Heart right ventricle (tissue), 16 donors: ENCODE measurements at regions of chr7 and their contacts with region 1.

Region 1: DNA sequence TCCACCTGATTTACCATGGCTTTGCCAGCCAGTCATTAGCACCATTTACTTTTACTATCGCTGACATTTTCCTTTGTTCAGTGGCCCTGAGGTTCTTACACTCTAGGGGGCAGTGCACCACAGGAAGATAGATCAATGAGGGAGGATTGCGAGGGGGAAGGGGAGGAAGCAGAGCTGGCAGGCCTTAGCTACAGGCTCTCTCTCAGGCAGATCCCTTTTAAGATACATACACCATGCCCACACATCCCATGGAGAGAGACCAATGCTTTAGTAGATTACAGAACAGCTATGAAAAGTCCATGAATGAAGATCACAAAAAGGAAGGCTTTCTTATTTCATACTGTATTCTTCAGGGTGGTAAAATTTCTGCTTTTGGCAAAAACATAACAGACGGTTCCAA is 47.4 kb downstream of the DENND11 start:
- DNase-seq: peak in 1 of 2 donors; percentile 73
- ATAC-seq: peak; percentile 56 to 85 (median 74)
- H3K4me3 ChIP-seq: no peak overlapping the region
- H3K27ac ChIP-seq: peak overlapping the region in 2 of 10 donors; percentile 17 to 22
- H3K4me1 ChIP-seq: peaks cover 0 to 23% (median 17%) of the 10 kb centered on the region in 9 donors
- H3K27me3 ChIP-seq: no peaks in the 10 kb centered on the region
- CTCF ChIP-seq: peak; percentile 29 to 76 (median 70)

Region 2: GRCh38 chr7:141014524-141015395 is 639.8 kb before region 1 on chr7 and contains the start of gene MRPS33:
- intact Hi-C with region 1: loop called in 2 of 10 experiments (anchors 5 to 10 kb)
- DNase-seq: peak; percentile 93 to 97
- ATAC-seq: peak; percentile 100
- H3K4me3 ChIP-seq: peak within 1 kb of the TSS; percentile 56 to 82 (median 70)
- H3K27ac ChIP-seq: peak within 1 kb of the TSS; percentile 74 to 95 (median 92)
- H3K4me1 ChIP-seq: peaks cover 0 to 21% (median 14%) of the 10 kb centered on the region in 9 donors
- H3K27me3 ChIP-seq: peaks cover 0 to 38% (median 0%) of the 10 kb centered on the region in 7 donors
- CTCF ChIP-seq: peak in 8 of 9 donors; percentile 12 to 77 (median 56)
- total RNA-seq, gene MRPS33: 95.8 to 151 (median 138) TPM

Region 3: DNA sequence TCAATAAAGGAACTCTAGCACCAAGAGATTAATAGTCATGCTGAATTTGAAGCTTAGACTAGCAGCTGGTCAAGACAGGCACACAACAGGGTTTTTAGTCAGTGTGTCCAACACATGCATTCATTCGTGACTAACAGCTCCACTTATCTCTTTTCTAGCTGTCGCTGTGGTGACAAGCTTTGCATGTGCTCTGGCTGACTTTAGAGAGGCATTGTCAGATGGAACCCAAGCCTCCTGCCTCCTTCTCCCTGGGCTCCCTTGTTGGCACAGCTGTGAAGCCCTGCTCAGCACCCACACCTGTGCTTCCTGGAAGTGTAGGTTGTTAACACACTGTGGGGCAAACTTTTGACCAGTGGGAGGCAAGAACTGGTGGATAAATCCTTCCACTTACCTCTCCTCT is 113.2 kb before region 1 on chr7:
- intact Hi-C with region 1: loop called in 1 of 10 experiments (anchors 10 kb)
- DNase-seq: no peak
- ATAC-seq: peak in 3 of 8 donors; percentile 41 to 61 (median 59)
- H3K4me3 ChIP-seq: no peak overlapping the region
- H3K27ac ChIP-seq: no peak overlapping the region
- H3K4me1 ChIP-seq: no peaks in the 10 kb centered on the region
- H3K27me3 ChIP-seq: peaks cover 0 to 8% (median 0%) of the 10 kb centered on the region in 7 donors
- CTCF ChIP-seq: no peak

Region 4: DNA sequence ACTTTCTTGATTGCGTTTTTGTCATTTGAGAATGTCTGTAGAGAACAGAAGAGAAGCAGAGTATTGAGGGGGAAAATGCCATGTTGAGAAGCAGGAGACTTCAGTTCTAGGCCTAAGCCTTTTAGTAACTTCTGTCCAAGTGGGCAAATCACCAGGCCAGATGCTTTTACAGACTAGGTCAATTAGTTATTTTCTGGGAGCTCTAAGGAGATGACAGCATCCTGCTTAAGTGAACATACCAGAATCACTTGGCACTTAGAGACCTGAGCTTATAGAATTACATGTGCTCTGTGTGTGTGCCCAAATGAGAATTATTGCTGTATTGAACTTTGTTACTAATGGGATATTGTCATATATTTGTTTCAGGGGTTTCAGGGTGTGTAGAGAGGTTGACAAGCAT is 79.4 kb before region 1 on chr7:
- intact Hi-C with region 1: no loop called
- DNase-seq: no peak
- ATAC-seq: no peak
- H3K4me3 ChIP-seq: no peak overlapping the region
- H3K27ac ChIP-seq: no peak overlapping the region
- H3K4me1 ChIP-seq: peaks cover 0 to 26% (median 0%) of the 10 kb centered on the region in 9 donors
- H3K27me3 ChIP-seq: no peaks in the 10 kb centered on the region
- CTCF ChIP-seq: no peak

Region 5: DNA sequence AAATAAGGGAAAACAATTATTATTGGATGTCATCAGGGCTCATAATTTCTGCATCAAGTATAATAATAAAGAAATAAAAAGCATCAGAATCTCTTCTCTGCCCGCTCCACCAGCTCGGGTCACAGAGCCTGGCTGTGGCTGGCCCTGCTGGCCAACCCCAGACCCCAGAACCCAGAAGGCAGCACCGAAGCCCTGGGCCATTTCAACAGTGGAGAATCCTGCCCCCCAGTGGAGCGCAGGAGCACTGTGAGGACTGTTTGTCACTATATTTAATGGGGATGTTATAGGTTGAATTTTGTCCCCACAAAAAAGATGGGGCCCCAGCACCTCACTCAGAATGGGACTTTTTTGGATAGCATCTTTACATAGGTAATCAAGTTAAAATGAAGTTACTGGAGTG is 20.2 kb after region 1 on chr7:
- intact Hi-C with region 1: loop called in 1 of 10 experiments (anchors 2 kb)
- DNase-seq: no peak
- ATAC-seq: peak in 6 of 8 donors; percentile 32 to 74 (median 50)
- H3K4me3 ChIP-seq: no peak overlapping the region
- H3K27ac ChIP-seq: peak overlapping the region; percentile 38 to 88 (median 72)
- H3K4me1 ChIP-seq: peaks cover 0 to 48% (median 11%) of the 10 kb centered on the region in 9 donors
- H3K27me3 ChIP-seq: no peaks in the 10 kb centered on the region
- CTCF ChIP-seq: peak in 6 of 9 donors; percentile 28 to 53 (median 42)

Region 6: GRCh38 chr7:141737834-141738591 is 83.5 kb after region 1 on chr7 and contains the start of gene SSBP1:
- intact Hi-C with region 1: loop called in 7 of 10 experiments (anchors 2 to 10 kb)
- DNase-seq: peak; percentile 83 to 92
- ATAC-seq: peak; percentile 94 to 98 (median 96)
- H3K4me3 ChIP-seq: peak within 1 kb of the TSS; percentile 61 to 88 (median 77)
- H3K27ac ChIP-seq: peak within 1 kb of the TSS in 9 of 10 donors; percentile 70 to 89 (median 80)
- H3K4me1 ChIP-seq: peaks cover 6 to 35% (median 26%) of the 10 kb centered on the region in 9 donors
- H3K27me3 ChIP-seq: no peaks in the 10 kb centered on the region
- CTCF ChIP-seq: peak; percentile 65 to 89 (median 79)
- total RNA-seq, gene SSBP1: 97.4 to 122 (median 107) TPM